ENCODE measurements at regions of chr6 and their contacts with region 1.

Region 1: GRCh38 chr6:36615018-36615761 is 21.0 kb downstream of the SRSF3 start:
- DNase-seq: no peak
- ATAC-seq: peak; percentile 54
- H3K4me3 ChIP-seq: no peak overlapping the region
- H3K27ac ChIP-seq: peak overlapping the region; percentile 64; the same call in 1 of the 2 replicates
- H3K4me1 ChIP-seq: peaks cover 22% of the 10 kb centered on the region
- H3K27me3 ChIP-seq: no peaks in the 10 kb centered on the region
- CTCF ChIP-seq: peak; percentile 91

Region 2: DNA sequence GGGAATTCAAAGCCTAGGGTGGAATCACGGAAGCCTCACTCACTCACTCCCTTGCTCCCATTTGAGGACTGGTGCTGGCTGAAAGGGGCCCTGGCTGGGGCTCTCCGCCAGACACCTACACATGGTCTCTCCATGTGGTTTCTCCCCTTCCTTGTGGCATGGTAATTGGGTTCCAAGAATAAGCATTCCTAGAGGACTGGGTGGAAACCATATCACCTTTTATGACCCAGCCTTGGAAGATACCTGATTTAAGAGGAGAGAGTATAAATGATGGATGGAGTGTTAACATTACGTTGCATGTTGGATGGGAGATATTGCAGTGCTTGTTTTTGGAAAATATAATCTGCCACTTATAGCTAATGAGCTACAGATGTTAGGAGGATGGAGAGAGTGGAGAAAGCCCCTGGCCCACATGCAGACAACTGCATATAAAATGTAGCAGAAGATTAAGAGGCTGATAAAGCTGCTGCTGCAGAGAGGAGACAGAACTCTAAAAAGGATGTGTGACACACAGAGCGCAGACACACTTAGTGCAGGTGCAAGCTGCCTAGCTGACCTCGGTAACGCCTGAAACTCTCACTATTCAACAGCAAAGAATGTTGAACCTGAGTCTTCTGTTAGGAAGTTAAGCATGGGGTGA is 40.0 kb after region 1 on chr6:
- CTCF ChIA-PET with region 1: interaction called, 12 read pairs
- POLR2A ChIA-PET with region 1: interaction called, 8 read pairs
- in situ Hi-C with region 1: no loop called
- intact Hi-C with region 1: no loop called
- DNase-seq: no peak
- ATAC-seq: no peak
- H3K4me3 ChIP-seq: no peak overlapping the region
- H3K27ac ChIP-seq: no peak overlapping the region
- H3K4me1 ChIP-seq: no peaks in the 10 kb centered on the region
- H3K27me3 ChIP-seq: no peaks in the 10 kb centered on the region; the same call in 1 of the 2 replicates
- CTCF ChIP-seq: no peak

Region 3: GRCh38 chr6:36678518-36679027 is 63.4 kb after region 1 on chr6 and contains the start of gene CDKN1A:
- CTCF ChIA-PET with region 1: interaction called, 9 read pairs
- POLR2A ChIA-PET with region 1: interaction called, 13 read pairs
- in situ Hi-C with region 1: no loop called
- intact Hi-C with region 1: no loop called
- DNase-seq: no peak
- ATAC-seq: peak; percentile 88
- H3K4me3 ChIP-seq: peak within 1 kb of the TSS; percentile 77 to 89
- H3K27ac ChIP-seq: peak within 1 kb of the TSS; percentile 75
- H3K4me1 ChIP-seq: peaks cover 38% of the 10 kb centered on the region
- H3K27me3 ChIP-seq: no peaks in the 10 kb centered on the region
- CTCF ChIP-seq: no peak
- total RNA-seq, gene CDKN1A: 46.2 TPM

Region 4: DNA sequence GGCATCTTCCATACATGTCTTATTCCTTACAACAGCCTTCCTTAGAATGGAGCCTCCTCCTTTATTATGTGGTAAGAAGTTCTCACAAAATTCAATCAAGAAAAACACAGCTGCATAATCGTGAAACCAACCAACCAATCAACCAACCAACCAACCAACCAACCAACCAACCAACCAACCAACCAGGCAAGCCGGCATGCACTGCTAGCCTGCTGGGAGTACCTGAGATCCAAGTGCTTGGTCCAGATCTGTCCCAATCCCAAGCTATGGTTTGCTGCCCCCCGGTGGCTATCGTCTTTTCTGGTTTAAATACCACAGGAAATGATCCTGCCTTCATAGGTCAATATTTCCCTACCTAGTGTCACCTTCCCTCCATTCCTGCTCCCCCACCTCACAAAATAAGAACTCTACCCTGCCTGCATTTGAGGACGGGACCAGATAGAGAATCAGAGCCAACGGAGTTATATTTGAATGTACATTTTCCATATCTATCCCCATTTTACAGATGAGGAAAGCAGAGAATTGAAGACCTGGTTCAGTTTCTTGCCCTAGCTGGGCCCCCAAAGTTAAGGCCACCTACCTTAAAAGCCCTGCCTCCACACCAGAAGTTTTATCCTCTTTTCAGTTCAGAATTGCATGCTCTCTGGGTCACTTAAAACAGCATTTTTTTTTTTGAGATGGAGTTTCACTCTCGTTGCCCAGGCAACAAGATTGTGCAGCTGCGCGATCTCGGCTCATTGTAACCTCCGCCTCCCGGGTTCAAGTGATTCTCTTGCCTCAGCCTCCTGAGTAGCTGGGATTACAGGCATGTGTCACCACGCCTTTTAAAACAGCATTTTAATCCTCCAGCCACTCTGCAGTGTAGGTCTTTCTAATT is 109.6 kb after region 1 on chr6:
- CTCF ChIA-PET with region 1: interaction called, 11 read pairs
- POLR2A ChIA-PET with region 1: no interaction called
- in situ Hi-C with region 1: no loop called
- intact Hi-C with region 1: loop called (anchors 1 kb)
- DNase-seq: peak; percentile 27
- ATAC-seq: peak; percentile 85
- H3K4me3 ChIP-seq: no peak overlapping the region
- H3K27ac ChIP-seq: no peak overlapping the region
- H3K4me1 ChIP-seq: no peaks in the 10 kb centered on the region
- H3K27me3 ChIP-seq: no peaks in the 10 kb centered on the region
- CTCF ChIP-seq: peak; percentile 84; the same call in 1 of the 2 replicates

Region 5: GRCh38 chr6:36752187-36752885 is 137.1 kb after region 1 on chr6:
- CTCF ChIA-PET with region 1: interaction called, 11 read pairs
- POLR2A ChIA-PET with region 1: no interaction called
- in situ Hi-C with region 1: no loop called
- intact Hi-C with region 1: no loop called
- DNase-seq: no peak
- ATAC-seq: no peak
- H3K4me3 ChIP-seq: no peak overlapping the region
- H3K27ac ChIP-seq: no peak overlapping the region
- H3K4me1 ChIP-seq: peaks cover 6% of the 10 kb centered on the region
- H3K27me3 ChIP-seq: no peaks in the 10 kb centered on the region
- CTCF ChIP-seq: no peak

Region 6: DNA sequence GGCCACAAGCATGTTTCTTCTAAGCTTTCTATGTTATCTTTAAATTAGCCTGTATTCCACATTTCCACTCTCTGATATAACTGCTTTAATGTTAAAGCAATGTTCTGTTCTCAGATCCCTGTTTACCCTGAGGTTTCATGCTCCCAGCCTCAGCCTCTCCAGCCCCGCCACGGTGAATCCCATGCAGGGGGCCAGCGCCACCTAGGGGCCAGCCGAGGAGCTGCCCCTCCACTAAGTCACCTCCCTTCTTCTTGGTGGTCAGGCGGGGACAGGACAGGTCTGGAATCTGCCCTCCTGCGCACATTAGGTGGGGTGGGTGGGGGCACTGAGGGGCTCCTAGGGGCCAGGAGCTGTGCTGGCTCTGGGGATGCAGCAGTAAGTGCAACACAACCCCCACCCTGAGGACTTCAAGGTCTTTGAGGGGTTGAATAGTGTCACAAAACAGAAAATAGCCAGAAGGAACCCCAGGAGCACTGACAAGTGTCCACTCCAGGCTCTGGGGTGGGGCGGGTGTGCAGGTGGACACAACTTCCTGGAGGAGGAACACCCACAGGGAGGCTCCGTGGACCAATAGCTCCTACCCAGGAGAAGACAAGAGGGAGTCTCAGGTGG is 144.1 kb after region 1 on chr6:
- CTCF ChIA-PET with region 1: interaction called, 19 read pairs
- POLR2A ChIA-PET with region 1: interaction called, 14 read pairs
- in situ Hi-C with region 1: no loop called
- intact Hi-C with region 1: loop called (anchors 2 kb)
- DNase-seq: no peak
- ATAC-seq: peak; percentile 90
- H3K4me3 ChIP-seq: no peak overlapping the region
- H3K27ac ChIP-seq: no peak overlapping the region
- H3K4me1 ChIP-seq: peaks cover 3% of the 10 kb centered on the region
- H3K27me3 ChIP-seq: no peaks in the 10 kb centered on the region
- CTCF ChIP-seq: peak; percentile 99

Region 7: DNA sequence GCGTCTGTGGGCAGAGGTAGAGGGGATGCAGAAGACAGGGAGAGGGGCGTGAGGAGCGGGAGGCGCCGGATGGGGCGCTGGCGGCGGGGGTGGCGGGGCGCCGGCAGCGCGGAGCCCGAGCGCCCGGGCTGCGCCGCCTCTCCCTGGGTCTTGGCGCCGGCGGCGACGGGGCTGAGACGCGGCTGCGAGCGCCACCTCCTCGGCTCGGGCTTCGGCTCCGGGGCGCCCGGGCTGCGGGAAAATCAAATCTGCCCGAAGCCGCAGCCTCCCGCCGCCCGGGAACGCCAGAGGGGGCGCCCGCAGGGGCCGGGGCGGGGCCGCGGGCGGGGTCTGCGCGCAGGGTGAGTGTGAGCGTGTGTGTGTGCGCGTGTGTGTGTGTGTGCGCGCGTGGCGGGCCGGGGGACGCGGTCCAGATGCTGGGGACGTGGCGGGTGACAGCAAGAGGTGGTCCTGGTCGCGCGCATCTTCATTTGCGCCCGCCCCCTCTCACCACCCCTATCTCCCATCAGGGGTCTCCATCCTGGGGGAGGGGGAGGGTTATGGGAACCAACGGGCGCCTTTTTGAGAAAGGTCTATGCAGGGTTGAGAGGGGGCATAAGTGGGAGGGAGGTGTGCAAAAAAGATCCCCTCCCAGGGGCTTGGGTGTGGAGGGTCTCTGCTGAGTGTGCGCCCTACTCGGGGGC is 224.7 kb after region 1 on chr6:
- CTCF ChIA-PET with region 1: no interaction called
- POLR2A ChIA-PET with region 1: no interaction called
- in situ Hi-C with region 1: no loop called
- intact Hi-C with region 1: loop called (anchors 10 kb)
- DNase-seq: no peak
- ATAC-seq: peak; percentile 65
- H3K4me3 ChIP-seq: peak overlapping the region; percentile 38 to 48
- H3K27ac ChIP-seq: no peak overlapping the region
- H3K4me1 ChIP-seq: peaks cover 12% of the 10 kb centered on the region
- H3K27me3 ChIP-seq: no peaks in the 10 kb centered on the region; the same call in 1 of the 2 replicates
- CTCF ChIP-seq: peak; percentile 77; the same call in 1 of the 2 replicates